ENCODE measurements at regions of chr18 and their contacts with region 1.

Region 1: GRCh38 chr18:57188851-57189557 is 42.1 kb downstream of the BOD1L2 start:
- DNase-seq: no peak
- ATAC-seq: no peak
- H3K4me3 ChIP-seq: no peak overlapping the region
- H3K27ac ChIP-seq: no peak overlapping the region
- H3K4me1 ChIP-seq: no peaks in the 10 kb centered on the region
- H3K27me3 ChIP-seq: no peaks in the 10 kb centered on the region

Region 2: GRCh38 chr18:57121542-57122112 is 67.4 kb before region 1 on chr18:
- intact Hi-C with region 1: loop called in 1 of 4 experiments (anchors 10 kb)
- DNase-seq: no peak
- ATAC-seq: no peak
- H3K4me3 ChIP-seq: no peak overlapping the region
- H3K27ac ChIP-seq: no peak overlapping the region
- H3K4me1 ChIP-seq: no peaks in the 10 kb centered on the region
- H3K27me3 ChIP-seq: no peaks in the 10 kb centered on the region

Region 3: GRCh38 chr18:57141208-57142129 is 47.5 kb before region 1 on chr18:
- intact Hi-C with region 1: no loop called
- DNase-seq: no peak
- ATAC-seq: no peak
- H3K4me3 ChIP-seq: no peak overlapping the region
- H3K27ac ChIP-seq: no peak overlapping the region
- H3K4me1 ChIP-seq: no peaks in the 10 kb centered on the region
- H3K27me3 ChIP-seq: no peaks in the 10 kb centered on the region

Measured in right cardiac atrium (tissue), 5 donors.